K562 (cell line): ENCODE measurements at regions of chr4 and their contacts with region 1.

Region 1: GRCh38 chr4:56544573-56545131 is 39.1 kb downstream of the ARL9 start:
- DNase-seq: peak; percentile 86 to 92 (median 88)
- ATAC-seq: peak; percentile 99
- H3K4me3 ChIP-seq: peak overlapping the region; percentile 27
- H3K27ac ChIP-seq: no peak overlapping the region
- H3K4me1 ChIP-seq: peaks cover 0 to 6% of the 10 kb centered on the region in 2 experiments; a peak in 3 of 5 replicates
- H3K27me3 ChIP-seq: no peaks in the 10 kb centered on the region
- CTCF ChIP-seq: peak; percentile 98 to 99 (median 99)
- EP300 ChIP-seq: peak; percentile 19; the same call in 1 of the 2 replicates
- POLR2A ChIP-seq: no peak
- RAD21 ChIP-seq: peak; percentile 93 to 94

Region 2: DNA sequence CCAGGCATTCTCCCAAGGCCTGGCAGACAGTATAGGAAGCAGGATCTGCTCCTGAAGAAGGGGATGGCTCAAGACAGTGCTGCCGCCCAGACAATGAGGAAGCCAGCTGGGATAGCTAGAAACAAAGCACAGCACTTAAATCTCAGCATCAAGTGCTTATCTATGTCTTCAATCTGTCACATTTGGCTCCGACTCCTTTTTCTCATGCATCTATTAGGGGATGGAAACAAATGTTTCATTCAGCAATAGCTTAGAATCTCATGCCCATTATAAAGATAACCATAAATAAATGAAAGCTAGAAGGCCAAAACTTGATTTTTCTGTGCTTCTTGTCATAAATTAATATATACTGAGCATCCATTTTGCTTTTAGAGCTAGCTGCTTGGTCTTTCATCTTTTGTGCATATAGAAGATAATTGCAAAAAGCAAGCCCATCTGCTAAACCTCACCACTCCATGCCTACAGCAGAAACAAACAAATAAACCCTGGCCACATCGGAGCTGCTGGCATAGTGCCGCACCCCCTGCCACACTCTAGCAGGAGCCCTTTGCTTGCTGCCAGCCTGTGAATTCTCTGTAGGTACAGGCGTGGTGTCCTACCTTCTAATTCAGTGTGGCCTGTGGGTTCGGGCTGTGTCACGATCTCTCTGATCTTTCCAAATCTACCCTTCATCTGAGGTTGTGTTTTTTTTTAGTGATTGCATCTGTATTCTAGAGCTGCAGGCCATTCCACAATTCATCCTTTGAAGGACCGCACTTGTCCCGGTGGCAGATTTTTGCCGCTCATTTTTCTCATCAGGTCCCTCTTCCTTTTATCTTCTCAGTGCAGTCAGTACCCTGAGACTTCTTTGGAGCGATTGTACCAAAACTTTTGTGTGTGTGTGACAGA is 233.1 kb before region 1 on chr4:
- CTCF ChIA-PET with region 1: no interaction called
- POLR2A ChIA-PET with region 1: no interaction called
- in situ Hi-C with region 1: no loop called
- intact Hi-C with region 1: loop called (anchors 10 kb)
- DNase-seq: no peak
- ATAC-seq: no peak
- H3K4me3 ChIP-seq: no peak overlapping the region
- H3K27ac ChIP-seq: no peak overlapping the region
- H3K4me1 ChIP-seq: peaks cover 0 to 23% of the 10 kb centered on the region in 2 experiments; a peak in 2 of 5 replicates
- H3K27me3 ChIP-seq: peaks cover 66 to 73% of the 10 kb centered on the region in 2 experiments
- CTCF ChIP-seq: no peak
- EP300 ChIP-seq: no peak
- POLR2A ChIP-seq: no peak
- RAD21 ChIP-seq: no peak

Region 3: DNA sequence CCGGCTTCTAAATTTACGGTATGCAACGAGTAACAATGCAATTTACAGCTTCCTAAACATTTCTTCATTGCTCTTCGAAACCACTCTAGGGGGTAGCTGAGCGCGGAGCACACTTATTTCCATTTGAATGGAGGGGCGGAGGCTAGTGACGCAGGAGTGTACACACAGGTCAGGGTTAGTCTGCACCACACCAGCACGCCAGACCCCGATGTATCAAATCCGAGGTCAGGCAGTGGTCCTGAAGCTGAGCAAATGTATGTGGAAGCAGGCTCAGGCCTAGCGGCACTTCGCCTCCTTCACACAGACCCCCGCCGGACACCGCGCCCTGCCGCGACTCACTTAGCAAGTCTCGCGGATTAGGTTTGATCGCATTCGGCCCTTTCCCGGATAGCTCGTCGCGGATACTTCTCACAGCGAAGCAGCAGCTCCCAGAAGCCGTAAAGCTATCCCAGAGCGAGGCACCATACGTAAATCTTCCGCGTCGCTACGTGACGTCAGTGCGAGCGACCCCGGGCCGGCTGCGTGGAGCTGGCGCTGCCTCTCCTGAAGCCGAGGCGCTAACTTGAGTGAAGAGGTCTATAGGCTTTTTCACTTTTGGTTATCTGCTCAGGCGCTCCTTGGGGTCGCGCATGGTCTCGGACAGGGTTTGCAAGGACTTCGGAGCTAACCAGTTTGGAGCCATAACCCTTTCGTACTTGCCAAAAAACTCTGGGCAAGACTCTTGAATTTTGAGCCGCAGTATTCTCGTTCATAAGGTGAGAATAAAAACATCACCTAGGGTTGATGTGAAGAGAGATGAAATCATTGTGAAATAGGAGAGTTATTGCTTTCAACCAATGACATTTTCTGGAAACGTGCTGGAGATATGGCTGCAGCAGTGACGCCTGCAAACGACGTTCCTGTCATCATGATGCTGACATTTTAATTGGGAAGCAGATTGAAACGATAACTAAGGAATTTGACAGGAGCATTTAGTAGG is 157.3 kb before region 1 on chr4 and contains the start of gene AASDH:
- CTCF ChIA-PET with region 1: no interaction called
- POLR2A ChIA-PET with region 1: interaction called, 4 read pairs
- in situ Hi-C with region 1: no loop called
- intact Hi-C with region 1: loop called (anchors 5 kb)
- DNase-seq: peak; percentile 86 to 96 (median 89)
- ATAC-seq: peak; percentile 88
- H3K4me3 ChIP-seq: peak within 1 kb of the TSS; percentile 61
- H3K27ac ChIP-seq: peak within 1 kb of the TSS; percentile 89
- H3K4me1 ChIP-seq: peaks cover 3 to 17% of the 10 kb centered on the region in 2 experiments; a peak in 2 of 5 replicates
- H3K27me3 ChIP-seq: no peaks in the 10 kb centered on the region
- CTCF ChIP-seq: peak in 2 of 3 experiments; percentile 4 to 10; a peak in 1 of 6 replicates
- EP300 ChIP-seq: peak; percentile 51
- POLR2A ChIP-seq: peak; percentile 98
- RAD21 ChIP-seq: no peak
- polyA plus RNA-seq, gene AASDH: 16.8 to 29.7 TPM

Region 4: DNA sequence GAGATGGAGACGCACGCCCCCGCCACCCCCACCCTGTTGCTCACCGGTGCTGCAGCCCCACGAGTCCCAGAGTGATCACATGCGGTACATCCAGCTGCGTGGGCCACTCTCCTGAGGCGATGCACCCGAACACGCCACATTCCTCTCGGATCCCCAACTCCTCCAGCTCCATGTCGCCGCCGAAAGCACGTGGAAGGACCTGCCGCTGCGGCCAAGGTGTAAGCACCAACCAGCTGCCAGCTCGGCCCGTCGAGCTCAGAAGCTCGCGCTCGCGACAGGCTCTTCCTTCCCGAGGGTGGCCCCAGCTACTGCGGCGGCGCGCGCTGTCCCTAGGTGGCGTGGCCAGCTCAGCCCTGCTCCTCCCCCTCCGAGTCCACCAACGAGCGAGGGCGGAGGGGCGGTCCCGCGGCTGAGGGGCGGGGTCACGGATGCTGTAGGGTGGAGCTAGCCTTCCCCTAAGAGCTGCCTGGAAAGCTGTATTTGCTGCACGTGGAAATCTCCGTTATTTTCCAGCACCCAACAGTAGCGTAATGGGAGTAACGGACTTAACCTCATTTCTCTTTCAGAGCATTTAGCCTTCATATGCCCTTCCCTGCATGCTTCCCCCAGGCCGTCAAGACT is 109.2 kb before region 1 on chr4 and contains the start of gene PPAT:
- CTCF ChIA-PET with region 1: no interaction called
- POLR2A ChIA-PET with region 1: interaction called, 3 read pairs
- in situ Hi-C with region 1: no loop called
- intact Hi-C with region 1: loop called (anchors 5 kb)
- DNase-seq: peak; percentile 93 to 99 (median 96)
- ATAC-seq: peak; percentile 82
- H3K4me3 ChIP-seq: peak within 1 kb of the TSS; percentile 89
- H3K27ac ChIP-seq: peak within 1 kb of the TSS; percentile 96
- H3K4me1 ChIP-seq: peaks cover 16 to 21% of the 10 kb centered on the region in 2 experiments; a peak in 3 of 5 replicates
- H3K27me3 ChIP-seq: no peaks in the 10 kb centered on the region
- CTCF ChIP-seq: peak in 2 of 3 experiments; percentile 19 to 29; a peak in 1 of 6 replicates
- EP300 ChIP-seq: no peak
- POLR2A ChIP-seq: peak; percentile 86
- RAD21 ChIP-seq: no peak
- polyA plus RNA-seq, gene PPAT: 49.3 to 55.5 TPM

Region 5: DNA sequence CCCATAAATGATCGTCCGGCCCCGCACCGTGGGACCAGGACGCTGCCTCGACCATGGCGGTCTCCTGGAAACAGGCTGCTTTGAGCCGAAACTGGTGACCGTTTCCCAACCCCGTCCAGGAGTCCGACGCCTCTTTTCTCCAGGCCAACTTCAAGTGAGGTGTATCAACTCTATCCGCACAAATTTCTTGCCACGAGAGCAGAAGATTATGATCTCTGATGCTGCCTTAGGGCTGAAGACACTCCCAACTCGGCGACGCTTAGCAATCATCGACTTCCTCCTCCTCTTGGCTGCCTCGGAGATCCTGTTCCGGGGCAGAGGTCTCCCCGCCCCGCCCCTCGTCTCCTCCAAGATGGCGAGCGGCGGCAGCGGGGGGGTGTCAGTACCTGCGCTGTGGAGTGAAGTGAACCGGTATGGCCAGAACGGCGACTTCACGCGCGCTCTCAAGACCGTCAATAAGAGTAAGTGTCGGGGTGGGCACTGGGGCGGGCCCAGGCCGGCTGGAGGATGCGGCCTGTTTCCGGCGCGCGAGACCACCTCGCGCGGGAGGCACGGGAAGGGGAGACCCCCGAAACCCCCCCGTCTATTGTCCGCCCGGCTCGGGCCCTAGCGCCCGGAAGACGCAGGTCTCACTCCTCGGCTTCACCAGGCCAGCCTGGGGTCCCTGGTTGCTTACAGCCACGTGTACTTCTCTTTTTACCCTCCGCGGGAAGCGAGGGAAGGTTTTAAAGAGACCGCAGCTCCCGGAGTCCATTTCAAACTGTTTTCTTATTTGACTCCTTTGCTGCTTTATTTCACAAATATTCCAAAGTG is 77.2 kb before region 1 on chr4 and contains the start of gene SRP72:
- CTCF ChIA-PET with region 1: interaction called, 3 read pairs
- POLR2A ChIA-PET with region 1: interaction called, 9 read pairs
- in situ Hi-C with region 1: no loop called
- intact Hi-C with region 1: loop called (anchors 2 kb)
- DNase-seq: peak; percentile 87 to 96 (median 90)
- ATAC-seq: peak; percentile 89
- H3K4me3 ChIP-seq: peak within 1 kb of the TSS; percentile 95
- H3K27ac ChIP-seq: peak within 1 kb of the TSS; percentile 99
- H3K4me1 ChIP-seq: peaks cover 0 to 15% of the 10 kb centered on the region in 2 experiments; a peak in 3 of 5 replicates
- H3K27me3 ChIP-seq: no peaks in the 10 kb centered on the region
- CTCF ChIP-seq: no peak
- EP300 ChIP-seq: peak; percentile 66
- POLR2A ChIP-seq: peak; percentile 96
- RAD21 ChIP-seq: no peak
- polyA plus RNA-seq, gene SRP72: 300 to 341 TPM

Region 6: GRCh38 chr4:56513517-56513916 is 31.1 kb before region 1 on chr4:
- CTCF ChIA-PET with region 1: no interaction called
- POLR2A ChIA-PET with region 1: no interaction called
- in situ Hi-C with region 1: no loop called
- intact Hi-C with region 1: loop called (anchors 1 kb)
- DNase-seq: peak; percentile 32 to 79 (median 55)
- ATAC-seq: peak; percentile 82
- H3K4me3 ChIP-seq: no peak overlapping the region
- H3K27ac ChIP-seq: peak overlapping the region; percentile 29
- H3K4me1 ChIP-seq: peaks cover 16 to 24% of the 10 kb centered on the region in 2 experiments
- H3K27me3 ChIP-seq: no peaks in the 10 kb centered on the region
- CTCF ChIP-seq: no peak
- EP300 ChIP-seq: peak; percentile 78; the same call in 1 of the 2 replicates
- POLR2A ChIP-seq: no peak
- RAD21 ChIP-seq: no peak; a peak in 1 of 4 replicates